ENCODE measurements at regions of chr22 and their contacts with region 1.

Region 1: DNA sequence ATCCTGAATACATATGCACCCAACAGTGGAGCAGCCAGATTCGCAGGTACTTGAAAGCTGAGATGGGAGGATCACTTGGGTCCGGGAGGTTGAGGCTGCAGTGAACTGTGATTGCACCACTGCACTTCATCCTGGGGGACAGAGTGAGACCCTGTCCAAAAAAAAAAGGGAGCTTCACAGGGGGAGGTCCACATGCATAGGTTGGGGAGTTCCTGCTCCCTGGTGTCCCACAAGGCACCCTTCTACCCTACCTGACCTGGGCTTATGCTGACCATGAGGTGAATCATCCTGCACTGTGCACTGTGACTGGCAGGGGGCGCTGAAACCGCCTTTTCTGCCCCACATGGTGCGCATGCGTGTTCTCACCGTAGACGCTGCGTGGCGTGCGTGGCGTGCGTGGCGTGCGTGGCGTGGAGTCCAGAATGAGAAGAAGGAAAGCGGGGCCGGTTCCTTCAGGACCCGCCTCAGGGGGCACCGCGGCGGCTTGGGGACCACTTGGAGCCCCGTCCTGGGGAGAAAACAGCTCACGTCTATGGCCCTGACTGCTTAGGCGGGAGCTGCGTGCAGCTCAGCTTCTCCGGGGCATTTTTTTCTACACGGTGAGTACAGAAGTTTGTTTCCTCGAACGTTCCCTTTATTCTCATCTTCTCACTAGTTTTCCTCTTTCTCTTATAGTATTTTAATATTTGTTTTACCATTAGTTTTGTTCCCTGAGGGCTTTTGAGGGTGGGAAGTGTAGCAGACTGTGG is 116.6 kb upstream of the GRK3 start:
- DNase-seq: peak; percentile 71 to 93 (median 88)
- ATAC-seq: peak; percentile 98
- H3K4me3 ChIP-seq: peak overlapping the region; percentile 81
- H3K4me3 Mint-ChIP-seq: peak overlapping the region; percentile 84 to 100 (median 95)
- H3K27ac ChIP-seq: peak overlapping the region; percentile 85
- H3K27ac Mint-ChIP-seq: peak overlapping the region; percentile 90 to 98 (median 95)
- H3K4me1 ChIP-seq: peaks cover 11 to 33% of the 10 kb centered on the region in 2 donors
- H3K4me1 Mint-ChIP-seq: peaks cover 32 to 48% (median 42%) of the 10 kb centered on the region in 7 donors
- H3K27me3 ChIP-seq: no peaks in the 10 kb centered on the region
- H3K27me3 Mint-ChIP-seq: no peaks in the 10 kb centered on the region

Region 2: GRCh38 chr22:24937187-24937586 is 510.7 kb before region 1 on chr22:
- CTCF ChIA-PET with region 1: no interaction called
- POLR2A ChIA-PET with region 1: no interaction called
- intact Hi-C with region 1: no loop called
- DNase-seq: no peak
- ATAC-seq: no peak
- H3K4me3 ChIP-seq: no peak overlapping the region
- H3K4me3 Mint-ChIP-seq: no peak overlapping the region
- H3K27ac ChIP-seq: no peak overlapping the region
- H3K27ac Mint-ChIP-seq: no peak overlapping the region
- H3K4me1 ChIP-seq: no peaks in the 10 kb centered on the region
- H3K4me1 Mint-ChIP-seq: no peaks in the 10 kb centered on the region
- H3K27me3 ChIP-seq: peaks cover 0 to 4% of the 10 kb centered on the region in 2 donors
- H3K27me3 Mint-ChIP-seq: peaks cover 0 to 10% (median 0%) of the 10 kb centered on the region in 5 donors

Region 3: DNA sequence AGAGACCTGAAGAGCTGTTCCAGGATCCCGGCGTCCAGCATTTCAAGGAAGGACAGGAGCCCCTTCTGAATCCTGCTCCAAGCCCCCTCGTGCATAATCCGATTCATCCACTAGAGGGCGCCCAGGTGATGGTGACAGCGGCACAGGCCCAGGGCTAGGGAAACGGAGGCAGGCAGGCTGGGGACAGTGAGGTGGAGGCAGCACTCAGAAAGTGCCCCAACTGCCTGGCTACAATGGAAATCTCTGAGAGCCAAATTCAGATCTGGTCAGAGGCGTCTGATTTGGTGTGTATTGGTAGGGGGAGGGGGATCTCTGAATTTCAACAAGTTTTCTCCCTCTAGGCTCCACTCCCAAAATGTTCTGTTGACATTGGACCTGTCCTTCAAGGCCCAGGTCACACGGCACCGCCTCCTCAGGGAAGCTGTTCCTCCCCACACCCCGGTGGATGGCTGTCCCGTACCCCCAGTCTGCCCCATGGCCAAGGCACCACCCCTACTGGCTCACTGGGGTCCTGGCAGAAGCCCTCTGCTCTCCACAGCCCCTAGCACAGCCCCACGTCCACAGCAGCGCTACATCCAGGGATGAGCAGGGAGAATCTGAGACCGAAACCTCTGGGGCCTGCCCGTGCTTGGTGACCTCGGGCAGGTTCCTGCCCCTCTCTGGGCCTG is 85.5 kb before region 1 on chr22:
- CTCF ChIA-PET with region 1: no interaction called
- POLR2A ChIA-PET with region 1: no interaction called
- intact Hi-C with region 1: loop called (anchors 1 kb)
- DNase-seq: peak in 8 of 9 donors; percentile 34 to 79 (median 50)
- ATAC-seq: peak; percentile 60
- H3K4me3 ChIP-seq: no peak overlapping the region
- H3K4me3 Mint-ChIP-seq: no peak overlapping the region
- H3K27ac ChIP-seq: no peak overlapping the region
- H3K27ac Mint-ChIP-seq: no peak overlapping the region
- H3K4me1 ChIP-seq: no peaks in the 10 kb centered on the region
- H3K4me1 Mint-ChIP-seq: peaks cover 0 to 6% (median 0%) of the 10 kb centered on the region in 7 donors
- H3K27me3 ChIP-seq: no peaks in the 10 kb centered on the region
- H3K27me3 Mint-ChIP-seq: no peaks in the 10 kb centered on the region

Region 4: GRCh38 chr22:25564320-25564978 is 116.6 kb after region 1 on chr22 and contains the start of gene GRK3:
- CTCF ChIA-PET with region 1: no interaction called
- POLR2A ChIA-PET with region 1: no interaction called
- intact Hi-C with region 1: loop called in 1 of 2 experiments (anchors 10 kb)
- DNase-seq: peak; percentile 30 to 73 (median 55)
- ATAC-seq: peak; percentile 74
- H3K4me3 ChIP-seq: peak within 1 kb of the TSS; percentile 57
- H3K4me3 Mint-ChIP-seq: peak within 1 kb of the TSS; percentile 89 to 99 (median 96)
- H3K27ac ChIP-seq: peak within 1 kb of the TSS; percentile 55
- H3K27ac Mint-ChIP-seq: peak within 1 kb of the TSS; percentile 29 to 94 (median 79)
- H3K4me1 ChIP-seq: peaks cover 4 to 11% of the 10 kb centered on the region in 2 donors
- H3K4me1 Mint-ChIP-seq: peaks cover 18 to 56% (median 38%) of the 10 kb centered on the region in 7 donors
- H3K27me3 ChIP-seq: no peaks in the 10 kb centered on the region
- H3K27me3 Mint-ChIP-seq: peaks cover 0 to 20% (median 0%) of the 10 kb centered on the region in 5 donors
- total RNA-seq, gene GRK3: 5.6 to 44.8 (median 6.5) TPM

Region 5: GRCh38 chr22:25602916-25603315 is 155.1 kb after region 1 on chr22:
- CTCF ChIA-PET with region 1: no interaction called
- POLR2A ChIA-PET with region 1: no interaction called
- intact Hi-C with region 1: no loop called
- DNase-seq: no peak
- ATAC-seq: no peak
- H3K4me3 ChIP-seq: no peak overlapping the region
- H3K4me3 Mint-ChIP-seq: no peak overlapping the region
- H3K27ac ChIP-seq: no peak overlapping the region
- H3K27ac Mint-ChIP-seq: no peak overlapping the region
- H3K4me1 ChIP-seq: no peaks in the 10 kb centered on the region
- H3K4me1 Mint-ChIP-seq: peaks cover 6 to 41% (median 10%) of the 10 kb centered on the region in 7 donors
- H3K27me3 ChIP-seq: no peaks in the 10 kb centered on the region
- H3K27me3 Mint-ChIP-seq: no peaks in the 10 kb centered on the region

Region 6: DNA sequence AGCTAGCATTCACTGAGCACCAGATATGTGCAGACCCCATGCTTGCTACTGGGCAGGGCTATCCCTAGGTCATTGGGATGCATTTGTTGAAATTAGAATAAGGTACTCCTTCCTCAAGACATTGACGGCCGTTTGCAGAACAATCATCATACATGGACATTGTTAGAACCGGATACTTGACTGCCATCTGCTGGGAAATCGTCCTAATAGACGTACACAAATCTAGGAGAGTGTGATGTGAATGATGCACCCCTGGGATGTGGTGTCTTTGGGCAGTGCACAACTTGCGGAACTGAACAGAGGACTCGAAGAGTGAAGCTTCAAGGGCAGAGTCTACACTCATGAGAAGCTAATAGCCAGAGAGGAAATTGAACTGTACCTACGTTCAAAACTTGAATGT is 330.0 kb after region 1 on chr22:
- CTCF ChIA-PET with region 1: interaction called, 3 read pairs
- POLR2A ChIA-PET with region 1: no interaction called
- intact Hi-C with region 1: loop called in 1 of 2 experiments (anchors 1 kb)
- DNase-seq: no peak
- ATAC-seq: no peak
- H3K4me3 ChIP-seq: no peak overlapping the region
- H3K4me3 Mint-ChIP-seq: no peak overlapping the region
- H3K27ac ChIP-seq: no peak overlapping the region
- H3K27ac Mint-ChIP-seq: no peak overlapping the region
- H3K4me1 ChIP-seq: no peaks in the 10 kb centered on the region
- H3K4me1 Mint-ChIP-seq: peaks cover 0 to 15% (median 3%) of the 10 kb centered on the region in 7 donors
- H3K27me3 ChIP-seq: no peaks in the 10 kb centered on the region
- H3K27me3 Mint-ChIP-seq: peaks cover 0 to 9% (median 4%) of the 10 kb centered on the region in 5 donors

Measured in naive thymus-derived CD4-positive, alpha-beta T cell (primary cell).